Heart right ventricle (tissue), 16 donors: ENCODE measurements at regions of chr5 and their contacts with region 1.

Region 1: DNA sequence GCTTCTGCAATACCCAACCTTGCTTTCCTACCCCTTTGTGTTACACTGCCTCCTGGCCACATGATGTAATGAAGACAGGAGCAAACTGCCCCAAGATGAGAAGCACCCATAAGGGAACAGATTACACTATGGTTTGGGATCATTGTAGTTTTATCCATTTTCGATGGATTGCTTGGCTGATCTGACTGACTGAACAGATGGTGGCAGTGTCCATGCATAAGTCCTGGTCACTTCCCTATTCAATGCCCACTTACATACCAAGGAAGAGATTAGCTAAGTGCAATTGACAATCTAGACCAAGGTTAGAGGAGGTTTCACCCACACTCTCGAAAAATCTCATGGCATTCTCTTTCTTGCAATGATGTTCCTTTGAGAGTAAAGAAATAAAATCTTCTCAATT is 319.9 kb downstream of the RAB3C start:
- DNase-seq: no peak
- ATAC-seq: peak in 3 of 8 donors; percentile 44 to 63 (median 55)
- H3K4me3 ChIP-seq: no peak overlapping the region
- H3K27ac ChIP-seq: no peak overlapping the region
- H3K4me1 ChIP-seq: peaks cover 0 to 7% (median 0%) of the 10 kb centered on the region in 9 donors
- H3K27me3 ChIP-seq: no peaks in the 10 kb centered on the region
- CTCF ChIP-seq: peak in 4 of 9 donors; percentile 20 to 36 (median 30)

Region 2: GRCh38 chr5:58999804-59000595 is 97.2 kb after region 1 on chr5:
- intact Hi-C with region 1: loop called in 3 of 10 experiments (anchors 5 to 10 kb)
- DNase-seq: no peak
- ATAC-seq: no peak
- H3K4me3 ChIP-seq: no peak overlapping the region
- H3K27ac ChIP-seq: no peak overlapping the region
- H3K4me1 ChIP-seq: peaks cover 2 to 30% (median 22%) of the 10 kb centered on the region in 9 donors
- H3K27me3 ChIP-seq: no peaks in the 10 kb centered on the region
- CTCF ChIP-seq: no peak